ENCODE measurements at regions of chr5 and their contacts with region 1.

Region 1: DNA sequence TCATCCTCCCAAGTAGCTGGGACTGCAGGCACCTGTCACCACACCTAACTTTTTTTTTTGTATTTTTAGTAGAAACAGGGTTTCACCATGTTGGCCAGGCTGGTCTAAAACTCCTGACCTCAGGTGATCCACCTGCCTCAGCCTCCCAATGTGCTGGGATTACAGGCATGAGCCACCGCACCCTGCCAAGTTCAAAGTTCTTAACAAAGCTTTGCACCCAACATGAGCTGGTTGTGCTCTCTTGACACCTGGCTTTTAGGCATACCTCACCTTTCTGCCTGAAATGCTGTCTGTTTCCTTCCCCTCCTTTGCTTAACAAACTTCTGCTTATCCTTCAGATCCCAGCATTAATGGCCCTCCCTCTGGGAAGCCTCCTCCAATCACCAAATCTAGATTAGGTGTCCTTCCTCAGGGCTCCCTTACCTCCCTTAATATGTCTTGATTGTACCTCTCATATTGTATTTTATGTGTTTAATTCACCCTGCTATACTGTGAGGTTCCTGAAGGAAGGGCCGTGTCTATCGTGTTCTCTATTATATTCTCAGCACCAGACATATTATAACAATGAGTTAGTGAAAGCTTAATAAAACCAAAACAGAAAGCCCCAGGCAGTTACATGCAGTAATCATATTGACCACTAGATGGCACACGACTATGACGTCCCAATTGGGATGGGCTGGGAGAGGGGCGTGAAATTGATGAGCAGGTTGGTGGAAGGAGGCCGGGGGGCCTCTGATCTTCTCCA is 62.9 kb upstream of the PPARGC1B start:
- DNase-seq: peak; percentile 35 to 58 (median 54)
- H3K4me3 ChIP-seq: no peak overlapping the region
- H3K27ac ChIP-seq: no peak overlapping the region
- H3K4me1 ChIP-seq: peaks cover 0 to 4% (median 0%) of the 10 kb centered on the region in 4 experiments
- H3K27me3 ChIP-seq: no peaks in the 10 kb centered on the region

Region 2: DNA sequence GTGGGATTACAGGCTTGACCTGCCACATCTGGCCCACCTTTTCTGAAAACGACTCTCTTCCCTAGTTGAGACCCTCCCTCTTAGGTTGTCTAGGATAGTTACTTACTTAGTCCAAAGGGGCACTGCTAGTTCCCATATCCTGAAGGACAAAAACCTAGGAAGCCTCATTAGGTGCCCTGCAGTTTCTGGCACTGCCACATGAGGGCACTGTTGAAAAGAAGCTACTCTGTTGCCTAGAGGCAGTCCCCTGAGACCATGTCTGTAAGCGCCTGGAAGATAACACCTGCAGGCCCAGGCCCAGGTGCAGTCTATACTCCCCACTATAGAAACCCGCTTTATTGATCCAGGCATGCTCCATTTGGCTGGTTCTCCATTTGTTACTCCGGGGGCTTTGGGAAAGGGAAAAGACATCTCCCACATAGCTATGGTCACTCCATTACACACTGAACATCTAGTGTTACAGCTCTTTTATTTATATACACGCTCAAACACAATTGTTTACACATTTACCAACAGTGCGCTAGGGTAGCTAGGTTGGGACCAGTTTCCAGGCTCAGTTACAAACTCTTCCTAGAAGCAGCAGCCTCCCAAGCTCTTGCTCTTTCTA is 10.6 kb before region 1 on chr5:
- CTCF ChIA-PET with region 1: interaction called, 13 read pairs
- POLR2A ChIA-PET with region 1: interaction called, 3 read pairs
- DNase-seq: peak in 2 of 3 donors; percentile 21 to 22
- H3K4me3 ChIP-seq: no peak overlapping the region
- H3K27ac ChIP-seq: no peak overlapping the region
- H3K4me1 ChIP-seq: no peaks in the 10 kb centered on the region
- H3K27me3 ChIP-seq: no peaks in the 10 kb centered on the region

Measured in common myeloid progenitor, CD34-positive (primary cell).